Activated CD4-positive, alpha-beta memory T cell treated with anti-CD3 and anti-CD28 coated beads for 36 hours (primary cell): ENCODE measurements at regions of chr6 and their contacts with region 1.

Region 1: GRCh38 chr6:112043032-112044007 is 10.6 kb upstream of the CCN6 start:
- DNase-seq: peak; percentile 94
- H3K4me3 Mint-ChIP-seq: peak overlapping the region; percentile 84
- H3K27ac Mint-ChIP-seq: peak overlapping the region; percentile 96
- H3K4me1 Mint-ChIP-seq: peaks cover 41% of the 10 kb centered on the region
- H3K27me3 Mint-ChIP-seq: no peaks in the 10 kb centered on the region

Region 2: DNA sequence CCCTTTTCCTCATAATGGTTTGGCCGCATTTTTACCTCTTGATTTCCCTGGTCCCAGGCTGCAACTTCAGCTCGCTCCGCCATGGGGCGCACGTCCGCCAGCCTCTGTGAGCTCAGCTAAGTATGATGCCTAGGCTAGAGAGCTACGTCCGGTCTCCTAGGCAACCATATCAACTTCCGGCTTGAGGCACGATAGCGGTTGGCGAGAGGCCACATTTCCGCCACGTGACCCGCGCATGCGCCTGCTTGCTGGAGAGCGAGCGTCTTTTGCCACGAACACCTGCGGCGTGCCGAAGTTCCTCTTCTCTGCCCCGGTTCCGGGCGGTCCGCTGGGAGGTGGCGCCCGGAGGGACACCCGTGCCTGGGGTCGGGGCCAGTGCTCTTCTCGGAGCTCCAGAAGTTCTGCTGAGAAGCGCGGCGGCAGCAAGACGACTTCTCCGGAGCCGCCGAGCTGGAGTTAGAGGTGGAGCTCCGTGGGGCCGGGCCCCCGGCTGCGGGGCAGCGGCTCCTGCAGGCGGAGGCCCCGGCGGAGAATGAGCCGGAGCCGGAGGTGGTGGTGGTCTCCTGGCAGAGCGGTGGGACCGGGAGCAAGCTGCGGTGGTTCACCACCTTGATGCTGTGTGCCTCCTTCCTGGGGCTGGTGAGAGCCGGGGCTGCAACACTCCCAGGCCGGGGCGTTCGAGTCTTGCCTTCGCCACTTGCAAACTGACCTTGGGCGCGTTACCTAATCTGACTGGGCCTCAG is 784.1 kb before region 1 on chr6:
- CTCF ChIA-PET with region 1: interaction called, 40 read pairs
- POLR2A ChIA-PET with region 1: interaction called, 6 read pairs
- intact Hi-C with region 1: loop called (anchors 1 kb)
- DNase-seq: peak; percentile 99
- H3K4me3 Mint-ChIP-seq: peak overlapping the region; percentile 76
- H3K27ac Mint-ChIP-seq: peak overlapping the region; percentile 79
- H3K4me1 Mint-ChIP-seq: peaks cover 31% of the 10 kb centered on the region
- H3K27me3 Mint-ChIP-seq: peaks cover 2% of the 10 kb centered on the region

Region 3: GRCh38 chr6:111605100-111605751 is 438.1 kb before region 1 on chr6:
- CTCF ChIA-PET with region 1: interaction called, 6 read pairs
- POLR2A ChIA-PET with region 1: no interaction called
- intact Hi-C with region 1: loop called (anchors 1 kb)
- DNase-seq: peak; percentile 43
- H3K4me3 Mint-ChIP-seq: peak overlapping the region; percentile 81
- H3K27ac Mint-ChIP-seq: peak overlapping the region; percentile 93
- H3K4me1 Mint-ChIP-seq: peaks cover 48% of the 10 kb centered on the region
- H3K27me3 Mint-ChIP-seq: no peaks in the 10 kb centered on the region

Region 4: GRCh38 chr6:111804627-111805235 is 238.6 kb before region 1 on chr6:
- CTCF ChIA-PET with region 1: interaction called, 13 read pairs
- POLR2A ChIA-PET with region 1: no interaction called
- intact Hi-C with region 1: no loop called
- DNase-seq: peak; percentile 86
- H3K4me3 Mint-ChIP-seq: peak overlapping the region; percentile 59
- H3K27ac Mint-ChIP-seq: peak overlapping the region; percentile 91
- H3K4me1 Mint-ChIP-seq: peaks cover 94% of the 10 kb centered on the region
- H3K27me3 Mint-ChIP-seq: no peaks in the 10 kb centered on the region

Region 5: GRCh38 chr6:111873178-111874024 is 169.9 kb before region 1 on chr6 and contains the start of gene FYN:
- CTCF ChIA-PET with region 1: interaction called, 11 read pairs
- POLR2A ChIA-PET with region 1: no interaction called
- intact Hi-C with region 1: loop called (anchors 1 kb)
- DNase-seq: peak; percentile 99
- H3K4me3 Mint-ChIP-seq: peak within 1 kb of the TSS; percentile 98
- H3K27ac Mint-ChIP-seq: peak within 1 kb of the TSS; percentile 96
- H3K4me1 Mint-ChIP-seq: peaks cover 30% of the 10 kb centered on the region
- H3K27me3 Mint-ChIP-seq: no peaks in the 10 kb centered on the region
- total RNA-seq, gene FYN: 353 to 365 TPM

Region 6: DNA sequence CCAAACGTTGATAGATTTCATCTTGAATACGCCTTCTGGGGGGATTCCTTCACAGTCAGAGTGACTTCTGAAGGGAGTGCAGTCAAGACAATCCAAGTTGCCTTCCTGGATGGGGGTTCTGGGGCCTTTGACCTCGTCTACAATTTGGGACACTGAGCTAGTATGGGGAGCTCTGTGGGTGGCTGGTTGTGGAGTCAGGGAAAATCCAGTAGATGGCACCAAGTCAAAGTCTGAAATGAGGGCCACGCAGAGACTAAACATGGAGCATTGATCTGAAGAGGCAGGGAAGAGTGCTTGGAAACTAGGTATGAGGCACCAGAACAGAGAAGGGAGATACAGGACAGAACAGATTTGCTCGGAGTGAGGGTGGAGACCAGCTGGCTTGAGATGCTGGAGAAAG is 33.0 kb before region 1 on chr6:
- CTCF ChIA-PET with region 1: interaction called, 193 read pairs
- POLR2A ChIA-PET with region 1: interaction called, 13 read pairs
- intact Hi-C with region 1: loop called (anchors 1 kb)
- DNase-seq: peak; percentile 49
- H3K4me3 Mint-ChIP-seq: no peak overlapping the region
- H3K27ac Mint-ChIP-seq: no peak overlapping the region
- H3K4me1 Mint-ChIP-seq: peaks cover 32% of the 10 kb centered on the region
- H3K27me3 Mint-ChIP-seq: no peaks in the 10 kb centered on the region

Region 7: GRCh38 chr6:112087136-112087911 is 44.0 kb after region 1 on chr6 and contains the starts of genes FAM229B and TUBE1:
- CTCF ChIA-PET with region 1: interaction called, 9 read pairs
- POLR2A ChIA-PET with region 1: no interaction called
- intact Hi-C with region 1: loop called (anchors 1 kb)
- DNase-seq: peak; percentile 94
- H3K4me3 Mint-ChIP-seq: no peak within 1 kb of the TSS
- H3K27ac Mint-ChIP-seq: no peak within 1 kb of the TSS
- H3K4me1 Mint-ChIP-seq: peaks cover 9% of the 10 kb centered on the region
- H3K27me3 Mint-ChIP-seq: peaks cover 11% of the 10 kb centered on the region
- total RNA-seq, gene FAM229B: 6.7 to 7.3 TPM
- total RNA-seq, gene TUBE1: 37.2 to 39.2 TPM

Region 8: GRCh38 chr6:112100561-112100960 is 57.2 kb after region 1 on chr6:
- CTCF ChIA-PET with region 1: no interaction called
- POLR2A ChIA-PET with region 1: no interaction called
- intact Hi-C with region 1: no loop called
- DNase-seq: no peak
- H3K4me3 Mint-ChIP-seq: no peak overlapping the region
- H3K27ac Mint-ChIP-seq: no peak overlapping the region
- H3K4me1 Mint-ChIP-seq: no peaks in the 10 kb centered on the region
- H3K27me3 Mint-ChIP-seq: no peaks in the 10 kb centered on the region

Region 9: DNA sequence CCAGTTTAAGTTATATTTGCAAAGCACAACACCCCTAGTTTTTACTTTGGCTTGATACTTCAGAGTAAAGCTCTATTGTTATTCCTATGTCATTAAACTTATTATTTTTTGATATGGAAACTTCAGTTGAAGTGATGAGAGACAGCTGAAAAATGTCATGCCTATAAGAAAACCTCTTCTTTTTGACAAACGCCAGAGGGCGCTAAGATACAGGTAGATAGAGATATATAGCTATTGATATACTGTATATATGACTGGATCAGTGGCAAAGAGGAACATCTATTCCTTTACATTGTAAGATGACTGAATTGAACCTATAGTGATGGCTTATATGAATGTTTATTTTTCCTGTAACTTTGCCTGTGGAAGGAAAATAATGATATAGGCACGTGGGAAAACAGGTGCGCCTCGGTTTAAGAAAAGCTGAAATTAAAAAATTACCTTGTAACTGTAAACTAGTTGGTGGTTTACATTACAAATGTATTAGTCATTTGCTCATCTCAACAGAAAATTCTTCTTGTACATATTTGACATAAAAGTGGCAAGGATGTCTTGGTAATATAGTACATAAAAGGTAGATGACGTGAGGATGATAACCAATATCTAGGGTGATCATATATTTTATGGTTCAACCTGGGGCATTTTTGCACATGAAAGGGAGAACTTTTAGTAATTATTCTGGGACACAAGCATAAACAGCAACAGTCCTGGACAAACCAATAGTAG is 136.9 kb after region 1 on chr6:
- CTCF ChIA-PET with region 1: no interaction called
- POLR2A ChIA-PET with region 1: no interaction called
- intact Hi-C with region 1: no loop called
- DNase-seq: peak; percentile 26
- H3K4me3 Mint-ChIP-seq: no peak overlapping the region
- H3K27ac Mint-ChIP-seq: no peak overlapping the region
- H3K4me1 Mint-ChIP-seq: no peaks in the 10 kb centered on the region
- H3K27me3 Mint-ChIP-seq: peaks cover 16% of the 10 kb centered on the region